ENCODE measurements at regions of chr19 and their contacts with region 1.

Region 1: GRCh38 chr19:47494729-47495128 is 10.7 kb upstream of the KPTN start:
- DNase-seq: no peak
- H3K4me3 ChIP-seq: no peak overlapping the region
- H3K27ac ChIP-seq: no peak overlapping the region
- H3K4me1 ChIP-seq: peaks cover 0 to 6% (median 2%) of the 10 kb centered on the region in 4 experiments; a peak in 2 of 7 replicates
- H3K27me3 ChIP-seq: no peaks in the 10 kb centered on the region
- CTCF ChIP-seq: no peak
- EP300 ChIP-seq: no peak
- POLR2A ChIP-seq: no peak
- RAD21 ChIP-seq: no peak

Region 2: GRCh38 chr19:47406711-47407416 is 87.9 kb before region 1 on chr19:
- CTCF ChIA-PET with region 1: no interaction called
- POLR2A ChIA-PET with region 1: no interaction called
- DNase-seq: peak in 1 of 2 experiments; percentile 88
- H3K4me3 ChIP-seq: peak overlapping the region; percentile 17 to 68 (median 48); a peak in 7 of 8 replicates
- H3K27ac ChIP-seq: no peak overlapping the region
- H3K4me1 ChIP-seq: peaks cover 0 to 5% (median 4%) of the 10 kb centered on the region in 4 experiments; a peak in 4 of 7 replicates
- H3K27me3 ChIP-seq: no peaks in the 10 kb centered on the region
- CTCF ChIP-seq: no peak
- EP300 ChIP-seq: no peak
- POLR2A ChIP-seq: no peak; a peak in 1 of 3 replicates
- RAD21 ChIP-seq: no peak

Region 3: DNA sequence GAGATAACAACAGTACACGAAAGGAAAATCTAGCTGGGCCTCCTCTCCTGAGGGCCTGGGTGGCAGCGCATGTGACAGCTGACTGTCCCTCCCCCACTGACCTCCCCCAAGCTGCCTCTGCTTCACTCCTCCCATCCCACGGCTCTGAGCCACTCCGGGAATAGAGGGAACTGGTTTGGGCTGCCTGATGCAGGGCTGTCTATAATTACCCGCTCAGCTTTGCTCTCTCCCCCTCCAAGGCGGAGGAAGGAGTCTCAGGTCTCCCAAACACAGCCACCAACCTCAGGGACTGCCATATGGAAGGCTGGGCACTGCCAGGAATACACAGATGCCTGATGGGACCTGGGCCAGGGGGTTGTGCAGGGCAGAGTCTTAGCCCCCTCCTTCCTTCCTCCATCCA is 12.3 kb after region 1 on chr19:
- CTCF ChIA-PET with region 1: interaction called, 10 read pairs
- POLR2A ChIA-PET with region 1: interaction called, 8 read pairs
- DNase-seq: no peak
- H3K4me3 ChIP-seq: no peak overlapping the region
- H3K27ac ChIP-seq: 0 out of 2 replicates have a peak overlapping the region, but pooled peaks have one; percentile 22
- H3K4me1 ChIP-seq: peaks cover 0 to 8% (median under 1%) of the 10 kb centered on the region in 4 experiments; a peak in 4 of 7 replicates
- H3K27me3 ChIP-seq: no peaks in the 10 kb centered on the region
- CTCF ChIP-seq: no peak
- EP300 ChIP-seq: no peak
- POLR2A ChIP-seq: no peak
- RAD21 ChIP-seq: no peak

Measured in H1 (cell line).